CD4-positive, alpha-beta memory T cell (primary cell): ENCODE measurements at regions of chr4 and their contacts with region 1.

Region 1: DNA sequence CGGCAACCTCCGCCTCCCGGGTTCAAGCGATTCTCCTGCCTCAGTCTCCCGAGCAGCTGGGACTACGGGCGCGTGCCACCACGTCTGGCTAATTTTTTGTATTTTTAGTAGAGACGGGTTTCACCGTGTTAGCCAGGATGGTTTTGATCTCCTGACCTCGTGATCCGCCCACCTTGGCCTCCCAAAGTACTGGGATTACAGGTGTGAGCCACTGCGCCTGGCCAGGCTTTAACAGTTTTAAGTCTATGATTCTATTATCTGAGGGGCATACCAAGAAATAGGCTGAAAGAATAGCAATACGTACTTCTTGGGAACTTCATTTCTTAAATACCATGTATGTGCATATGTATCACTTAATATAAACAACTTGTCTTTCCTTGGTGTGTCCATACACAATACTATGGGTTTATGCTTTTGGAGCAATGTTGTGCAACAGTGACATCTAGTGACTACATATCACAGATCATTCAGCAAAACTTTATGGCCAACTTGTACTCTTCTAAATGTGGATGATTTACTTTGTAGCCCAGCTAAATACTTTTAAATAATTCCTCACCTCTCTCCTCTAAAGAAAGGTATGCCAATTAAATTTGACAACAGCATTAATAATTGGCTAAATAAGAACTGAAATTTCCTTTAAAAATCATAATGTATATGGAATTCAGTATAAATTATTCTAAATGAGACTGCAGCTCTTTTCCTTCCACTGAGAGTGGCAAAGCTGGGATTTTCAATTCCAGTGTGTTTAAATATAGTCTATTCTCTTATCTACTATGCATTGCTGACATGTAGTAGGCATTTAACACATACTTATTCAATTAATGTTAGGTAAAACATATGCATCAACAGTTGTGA is 10.4 kb downstream of the SLC9B1 start:
- DNase-seq: peak; percentile 35 to 61 (median 59)
- H3K4me3 ChIP-seq: no peak overlapping the region
- H3K4me3 Mint-ChIP-seq: no peak overlapping the region
- H3K27ac ChIP-seq: no peak overlapping the region
- H3K27ac Mint-ChIP-seq: no peak overlapping the region
- H3K4me1 ChIP-seq: no peaks in the 10 kb centered on the region
- H3K4me1 Mint-ChIP-seq: peaks cover 0 to 2% (median 1%) of the 10 kb centered on the region in 4 donors
- H3K27me3 ChIP-seq: no peaks in the 10 kb centered on the region
- H3K27me3 Mint-ChIP-seq: peaks cover 0 to 1% of the 10 kb centered on the region in 2 donors

Region 2: GRCh38 chr4:102449751-102450352 is 559.2 kb before region 1 on chr4:
- CTCF ChIA-PET with region 1: interaction called, 19 read pairs
- POLR2A ChIA-PET with region 1: interaction called, 3 read pairs
- intact Hi-C with region 1: loop called (anchors 1 kb)
- DNase-seq: peak; percentile 67 to 75 (median 68)
- H3K4me3 ChIP-seq: no peak overlapping the region
- H3K4me3 Mint-ChIP-seq: no peak overlapping the region
- H3K27ac ChIP-seq: no peak overlapping the region
- H3K27ac Mint-ChIP-seq: no peak overlapping the region
- H3K4me1 ChIP-seq: peaks cover 12% of the 10 kb centered on the region
- H3K4me1 Mint-ChIP-seq: peaks cover 5 to 21% (median 9%) of the 10 kb centered on the region in 4 donors
- H3K27me3 ChIP-seq: no peaks in the 10 kb centered on the region
- H3K27me3 Mint-ChIP-seq: no peaks in the 10 kb centered on the region

Region 3: DNA sequence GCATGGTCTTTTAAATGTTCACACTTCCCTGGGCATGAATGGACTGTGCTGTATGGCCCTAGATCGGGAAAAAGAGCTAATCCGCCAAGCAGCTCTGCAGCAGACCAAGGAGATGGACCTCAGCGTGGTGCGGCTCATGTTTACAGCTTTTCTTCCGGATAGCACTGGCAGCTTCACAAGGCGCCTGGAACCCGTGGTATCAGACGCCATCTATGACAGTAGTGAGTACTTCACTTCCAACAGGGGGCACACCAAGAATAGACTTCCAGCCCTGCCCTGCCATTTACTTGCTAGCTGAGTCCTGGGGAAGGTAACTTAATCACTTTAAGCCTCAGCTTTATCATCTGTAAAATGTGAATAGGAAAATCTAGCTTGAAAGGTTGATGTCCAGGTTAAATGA is 430.3 kb before region 1 on chr4:
- CTCF ChIA-PET with region 1: no interaction called
- POLR2A ChIA-PET with region 1: no interaction called
- intact Hi-C with region 1: loop called (anchors 1 kb)
- DNase-seq: peak in 2 of 5 donors; percentile 22 to 23
- H3K4me3 ChIP-seq: no peak overlapping the region
- H3K4me3 Mint-ChIP-seq: no peak overlapping the region
- H3K27ac ChIP-seq: no peak overlapping the region
- H3K27ac Mint-ChIP-seq: peak overlapping the region; percentile 31 to 77 (median 66)
- H3K4me1 ChIP-seq: peaks cover 42% of the 10 kb centered on the region
- H3K4me1 Mint-ChIP-seq: peaks cover 56 to 82% (median 63%) of the 10 kb centered on the region in 4 donors
- H3K27me3 ChIP-seq: no peaks in the 10 kb centered on the region
- H3K27me3 Mint-ChIP-seq: no peaks in the 10 kb centered on the region

Region 4: DNA sequence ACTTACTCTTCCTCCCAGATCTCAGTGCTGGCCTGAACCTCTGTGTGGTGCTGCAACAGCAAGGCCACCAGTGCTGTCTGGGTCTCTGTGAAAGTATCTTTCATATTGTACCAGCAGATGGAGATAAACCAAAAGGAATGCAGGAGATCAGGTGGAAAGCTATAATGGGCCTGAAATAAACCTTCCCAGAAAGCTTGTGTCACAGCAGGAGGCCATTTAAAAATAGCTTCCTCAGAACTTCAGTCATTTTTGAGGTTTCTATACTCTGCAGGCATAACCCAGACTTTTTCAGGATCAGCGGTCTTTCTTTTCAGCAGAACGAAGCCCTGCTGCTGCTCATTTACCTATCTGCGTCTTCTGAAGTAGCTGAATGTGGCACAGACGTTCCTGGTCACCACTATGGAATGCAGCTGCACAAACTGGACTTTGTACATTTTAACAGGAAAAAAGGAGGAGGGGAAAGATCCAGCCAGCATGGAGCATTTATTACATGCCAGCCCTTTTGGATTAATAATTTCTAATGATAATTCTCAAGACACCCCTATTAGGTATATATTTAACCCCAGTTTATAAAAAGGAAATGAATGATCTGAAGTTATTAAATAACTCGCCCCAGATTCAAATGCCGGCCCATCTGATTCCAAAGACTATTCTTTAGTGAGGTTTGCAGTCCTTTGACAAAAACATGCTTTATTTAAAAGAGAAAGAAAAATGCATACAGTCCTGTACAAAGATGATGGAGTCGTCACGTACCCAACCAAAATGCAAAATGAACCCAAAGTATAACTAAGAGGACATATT is 388.2 kb before region 1 on chr4:
- CTCF ChIA-PET with region 1: interaction called, 22 read pairs
- POLR2A ChIA-PET with region 1: no interaction called
- intact Hi-C with region 1: loop called (anchors 1 kb)
- DNase-seq: peak in 2 of 5 donors; percentile 27 to 35
- H3K4me3 ChIP-seq: no peak overlapping the region
- H3K4me3 Mint-ChIP-seq: peak overlapping the region in 1 of 8 donors; percentile 40
- H3K27ac ChIP-seq: no peak overlapping the region
- H3K27ac Mint-ChIP-seq: peak overlapping the region in 5 of 7 donors; percentile 20 to 82 (median 80)
- H3K4me1 ChIP-seq: peaks cover 18% of the 10 kb centered on the region
- H3K4me1 Mint-ChIP-seq: peaks cover 19 to 70% (median 40%) of the 10 kb centered on the region in 4 donors
- H3K27me3 ChIP-seq: no peaks in the 10 kb centered on the region
- H3K27me3 Mint-ChIP-seq: no peaks in the 10 kb centered on the region

Region 5: DNA sequence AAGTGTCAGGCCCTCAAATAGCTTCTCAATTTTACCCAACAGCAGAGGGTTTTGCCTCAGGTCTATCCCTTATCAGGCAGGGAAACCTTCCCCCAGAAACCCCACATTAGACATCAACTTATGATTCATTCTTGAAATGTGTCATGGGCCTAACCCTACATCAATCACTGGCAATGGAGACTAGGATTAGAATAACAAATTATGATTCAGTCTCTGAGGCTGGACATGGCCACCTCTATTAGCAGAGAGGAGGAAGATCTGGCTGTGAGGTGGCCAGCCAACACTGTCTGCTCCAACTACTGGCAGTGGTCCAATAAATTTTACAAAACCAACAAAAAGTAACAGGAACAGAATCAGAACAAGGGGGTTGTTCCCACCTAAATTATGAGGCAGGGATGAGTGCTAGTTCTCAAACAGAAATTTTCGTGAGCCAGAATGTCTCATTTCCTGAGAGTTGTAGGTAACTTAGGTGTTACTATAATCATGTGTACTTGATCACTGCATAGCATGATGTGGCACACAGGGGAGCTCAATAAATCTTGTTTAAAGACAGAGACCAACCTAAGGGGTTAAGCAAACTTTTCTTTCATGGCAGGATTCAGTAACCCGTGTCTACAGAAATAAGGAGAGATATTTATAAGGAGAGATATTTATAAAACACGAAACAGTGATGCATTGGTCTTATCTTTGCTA is 381.1 kb before region 1 on chr4:
- CTCF ChIA-PET with region 1: interaction called, 8 read pairs
- POLR2A ChIA-PET with region 1: no interaction called
- intact Hi-C with region 1: loop called (anchors 1 kb)
- DNase-seq: peak in 1 of 5 donors; percentile 49
- H3K4me3 ChIP-seq: no peak overlapping the region
- H3K4me3 Mint-ChIP-seq: peak overlapping the region in 4 of 8 donors; percentile 13 to 71 (median 38)
- H3K27ac ChIP-seq: no peak overlapping the region
- H3K27ac Mint-ChIP-seq: peak overlapping the region in 5 of 7 donors; percentile 35 to 93 (median 81)
- H3K4me1 ChIP-seq: peaks cover 66% of the 10 kb centered on the region
- H3K4me1 Mint-ChIP-seq: peaks cover 47 to 94% (median 65%) of the 10 kb centered on the region in 4 donors
- H3K27me3 ChIP-seq: no peaks in the 10 kb centered on the region
- H3K27me3 Mint-ChIP-seq: no peaks in the 10 kb centered on the region

Region 6: GRCh38 chr4:102760645-102761295 is 248.3 kb before region 1 on chr4 and contains the start of gene MANBA:
- CTCF ChIA-PET with region 1: no interaction called
- POLR2A ChIA-PET with region 1: no interaction called
- intact Hi-C with region 1: loop called (anchors 2 kb)
- DNase-seq: peak; percentile 78 to 84 (median 79)
- H3K4me3 ChIP-seq: peak within 1 kb of the TSS; percentile 77 to 89
- H3K4me3 Mint-ChIP-seq: peak within 1 kb of the TSS; percentile 92 to 99 (median 98)
- H3K27ac ChIP-seq: peak within 1 kb of the TSS; percentile 65
- H3K27ac Mint-ChIP-seq: peak within 1 kb of the TSS; percentile 75 to 96 (median 94)
- H3K4me1 ChIP-seq: peaks cover 18% of the 10 kb centered on the region
- H3K4me1 Mint-ChIP-seq: peaks cover 24 to 47% (median 36%) of the 10 kb centered on the region in 4 donors
- H3K27me3 ChIP-seq: no peaks in the 10 kb centered on the region
- H3K27me3 Mint-ChIP-seq: peaks cover 0 to 3% of the 10 kb centered on the region in 2 donors
- total RNA-seq, gene MANBA: 30.0 to 33.2 TPM

Region 7: GRCh38 chr4:102994803-102995202 is 14.3 kb before region 1 on chr4:
- CTCF ChIA-PET with region 1: no interaction called
- POLR2A ChIA-PET with region 1: no interaction called
- intact Hi-C with region 1: no loop called
- DNase-seq: no peak
- H3K4me3 ChIP-seq: no peak overlapping the region
- H3K4me3 Mint-ChIP-seq: no peak overlapping the region
- H3K27ac ChIP-seq: no peak overlapping the region
- H3K27ac Mint-ChIP-seq: no peak overlapping the region
- H3K4me1 ChIP-seq: no peaks in the 10 kb centered on the region
- H3K4me1 Mint-ChIP-seq: no peaks in the 10 kb centered on the region
- H3K27me3 ChIP-seq: no peaks in the 10 kb centered on the region
- H3K27me3 Mint-ChIP-seq: no peaks in the 10 kb centered on the region

Region 8: GRCh38 chr4:103099691-103100392 is 90.7 kb after region 1 on chr4 and contains the start of gene BDH2:
- CTCF ChIA-PET with region 1: interaction called, 5 read pairs
- POLR2A ChIA-PET with region 1: no interaction called
- intact Hi-C with region 1: loop called (anchors 1 kb)
- DNase-seq: peak; percentile 77 to 84 (median 82)
- H3K4me3 ChIP-seq: peak within 1 kb of the TSS; percentile 4 to 54
- H3K4me3 Mint-ChIP-seq: peak within 1 kb of the TSS; percentile 81 to 97 (median 92)
- H3K27ac ChIP-seq: peak within 1 kb of the TSS; percentile 42
- H3K27ac Mint-ChIP-seq: peak within 1 kb of the TSS; percentile 59 to 95 (median 89)
- H3K4me1 ChIP-seq: peaks cover 14% of the 10 kb centered on the region
- H3K4me1 Mint-ChIP-seq: peaks cover 12 to 34% (median 24%) of the 10 kb centered on the region in 4 donors
- H3K27me3 ChIP-seq: no peaks in the 10 kb centered on the region
- H3K27me3 Mint-ChIP-seq: no peaks in the 10 kb centered on the region
- total RNA-seq, gene BDH2: 20.1 to 20.5 TPM